Caco-2 (cell line): ENCODE measurements at regions of chr9 and their contacts with region 1.

Region 1: GRCh38 chr9:35882263-35882848 is 12.2 kb upstream of the OR13J1 start:
- DNase-seq: peak; percentile 76 to 86
- H3K4me3 ChIP-seq: no peak overlapping the region
- H3K4me3 Mint-ChIP-seq: no peak overlapping the region
- H3K27ac Mint-ChIP-seq: no peak overlapping the region
- H3K4me1 ChIP-seq: no peaks in the 10 kb centered on the region
- H3K4me1 Mint-ChIP-seq: no peaks in the 10 kb centered on the region
- H3K27me3 ChIP-seq: no peaks in the 10 kb centered on the region
- H3K27me3 Mint-ChIP-seq: peaks cover 4% of the 10 kb centered on the region
- CTCF ChIP-seq: peak; percentile 93 to 97

Region 2: GRCh38 chr9:35646533-35647265 is 235.7 kb before region 1 on chr9:
- CTCF ChIA-PET with region 1: no interaction called
- POLR2A ChIA-PET with region 1: no interaction called
- intact Hi-C with region 1: loop called (anchors 5 kb)
- DNase-seq: peak; percentile 90 to 97
- H3K4me3 ChIP-seq: peak overlapping the region; percentile 46
- H3K4me3 Mint-ChIP-seq: peak overlapping the region; percentile 81
- H3K27ac Mint-ChIP-seq: peak overlapping the region; percentile 84
- H3K4me1 ChIP-seq: no peaks in the 10 kb centered on the region; the same call in 1 of the 2 replicates
- H3K4me1 Mint-ChIP-seq: peaks cover 10% of the 10 kb centered on the region
- H3K27me3 ChIP-seq: no peaks in the 10 kb centered on the region
- H3K27me3 Mint-ChIP-seq: no peaks in the 10 kb centered on the region
- CTCF ChIP-seq: peak; percentile 93 to 94

Region 3: GRCh38 chr9:35829084-35829763 is 53.1 kb before region 1 on chr9 and contains the start of gene TMEM8B:
- CTCF ChIA-PET with region 1: interaction called, 61 read pairs
- POLR2A ChIA-PET with region 1: interaction called, 5 read pairs
- intact Hi-C with region 1: loop called (anchors 1 kb)
- DNase-seq: peak; percentile 94 to 95
- H3K4me3 ChIP-seq: peak within 1 kb of the TSS; percentile 48
- H3K4me3 Mint-ChIP-seq: peak within 1 kb of the TSS; percentile 88
- H3K27ac Mint-ChIP-seq: peak within 1 kb of the TSS; percentile 88
- H3K4me1 ChIP-seq: peaks cover 4% of the 10 kb centered on the region; the same call in 1 of the 2 replicates
- H3K4me1 Mint-ChIP-seq: peaks cover 8% of the 10 kb centered on the region
- H3K27me3 ChIP-seq: no peaks in the 10 kb centered on the region
- H3K27me3 Mint-ChIP-seq: no peaks in the 10 kb centered on the region
- CTCF ChIP-seq: no peak
- total RNA-seq, gene TMEM8B: 4.8 and 4.9 TPM in 2 replicates

Region 4: DNA sequence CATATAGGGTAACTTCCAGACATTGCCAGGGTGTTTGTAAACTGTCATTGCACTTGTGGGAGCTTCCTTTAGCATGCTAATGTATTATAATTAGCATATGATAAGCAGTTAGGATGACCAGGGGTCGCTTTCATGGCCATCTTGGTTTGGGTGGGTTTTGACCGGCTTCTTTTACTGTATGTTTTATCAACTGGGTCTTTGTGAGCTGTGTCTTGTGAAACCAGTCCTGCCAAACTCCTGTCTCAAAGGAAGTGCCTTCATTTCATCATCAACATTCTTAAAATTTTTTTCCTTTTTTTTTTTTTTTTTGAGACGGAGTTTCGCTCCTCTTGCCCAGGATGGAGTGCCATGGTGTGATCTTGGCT is 678.5 kb after region 1 on chr9:
- CTCF ChIA-PET with region 1: no interaction called
- POLR2A ChIA-PET with region 1: no interaction called
- intact Hi-C with region 1: no loop called
- DNase-seq: peak; percentile 46 to 53
- H3K4me3 ChIP-seq: no peak overlapping the region
- H3K4me3 Mint-ChIP-seq: peak overlapping the region; percentile 19
- H3K27ac Mint-ChIP-seq: peak overlapping the region; percentile 69
- H3K4me1 ChIP-seq: peaks cover 23% of the 10 kb centered on the region
- H3K4me1 Mint-ChIP-seq: peaks cover 11% of the 10 kb centered on the region
- H3K27me3 ChIP-seq: no peaks in the 10 kb centered on the region
- H3K27me3 Mint-ChIP-seq: no peaks in the 10 kb centered on the region
- CTCF ChIP-seq: no peak